Naive thymus-derived CD4-positive, alpha-beta T cell (primary cell): ENCODE measurements at regions of chrX and their contacts with region 1.

Region 1: DNA sequence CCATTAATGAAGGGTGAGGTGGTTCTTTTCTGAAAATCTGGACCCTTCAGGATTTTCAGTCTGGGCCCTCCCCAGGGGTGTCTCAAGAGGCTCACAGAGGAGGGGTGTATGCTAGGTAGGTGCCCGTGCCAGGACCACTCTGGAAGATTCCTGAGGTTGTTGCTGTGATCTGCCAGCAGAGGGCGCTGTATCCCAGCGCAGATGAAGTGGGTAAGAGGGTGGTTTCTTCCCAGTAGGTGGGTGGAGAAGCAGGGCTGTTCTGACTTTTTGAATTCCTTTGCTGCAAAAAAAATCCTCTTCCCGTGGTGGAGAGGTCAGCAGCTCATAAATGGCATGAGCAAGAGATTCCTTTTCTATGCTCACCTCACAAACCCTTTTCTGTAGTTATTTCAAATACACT is 51.1 kb downstream of the SCML1 start:
- DNase-seq: peak; percentile 14 to 58 (median 32)
- ATAC-seq: peak; percentile 79
- H3K4me3 ChIP-seq: no peak overlapping the region
- H3K4me3 Mint-ChIP-seq: peak overlapping the region in 4 of 10 donors; percentile 17 to 25 (median 22)
- H3K27ac ChIP-seq: no peak overlapping the region
- H3K27ac Mint-ChIP-seq: peak overlapping the region in 3 of 9 donors; percentile 38 to 75 (median 65)
- H3K4me1 ChIP-seq: peaks cover 0 to 7% of the 10 kb centered on the region in 2 donors
- H3K4me1 Mint-ChIP-seq: peaks cover 5 to 25% (median 19%) of the 10 kb centered on the region in 7 donors
- H3K27me3 ChIP-seq: no peaks in the 10 kb centered on the region
- H3K27me3 Mint-ChIP-seq: peaks cover 0 to 4% (median 0%) of the 10 kb centered on the region in 5 donors

Region 2: GRCh38 chrX:17860811-17861488 is 72.5 kb after region 1 on chrX and contains the start of gene RAI2:
- CTCF ChIA-PET with region 1: no interaction called
- POLR2A ChIA-PET with region 1: no interaction called
- intact Hi-C with region 1: loop called in 1 of 2 experiments (anchors 5 kb)
- DNase-seq: peak in 6 of 9 donors; percentile 8 to 51 (median 26)
- ATAC-seq: peak; percentile 73
- H3K4me3 ChIP-seq: peak within 1 kb of the TSS; percentile 37
- H3K4me3 Mint-ChIP-seq: peak within 1 kb of the TSS; percentile 54 to 89 (median 86)
- H3K27ac ChIP-seq: no peak within 1 kb of the TSS
- H3K27ac Mint-ChIP-seq: peak within 1 kb of the TSS in 2 of 9 donors; percentile 62 to 70
- H3K4me1 ChIP-seq: no peaks in the 10 kb centered on the region
- H3K4me1 Mint-ChIP-seq: peaks cover 0 to 11% (median 5%) of the 10 kb centered on the region in 7 donors
- H3K27me3 ChIP-seq: no peaks in the 10 kb centered on the region
- H3K27me3 Mint-ChIP-seq: peaks cover 0 to 50% (median 27%) of the 10 kb centered on the region in 5 donors
- total RNA-seq, gene RAI2: 1.6 to 2.8 (median 2.2) TPM in 4 of 5 experiments, not detected in the other

Region 3: DNA sequence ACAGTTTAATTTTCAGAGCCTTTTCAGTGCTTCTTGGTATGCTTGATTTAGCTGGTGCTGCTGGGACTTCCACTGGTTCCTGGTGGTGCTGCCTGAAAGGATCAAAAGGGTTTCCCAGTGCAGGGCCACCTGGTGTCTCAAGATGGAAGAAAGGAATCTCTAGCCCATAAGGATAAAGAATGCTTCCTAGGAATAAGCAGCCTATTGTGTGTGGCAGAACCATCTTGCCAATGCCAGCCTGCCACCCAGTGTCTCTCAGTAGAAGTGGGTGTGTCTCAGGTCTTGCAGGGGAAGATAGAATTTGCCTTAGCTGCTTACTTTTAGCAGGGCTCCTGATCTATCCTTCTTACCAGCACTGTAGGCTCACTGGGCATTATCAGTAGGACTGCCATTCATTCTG is 87.7 kb after region 1 on chrX:
- CTCF ChIA-PET with region 1: no interaction called
- POLR2A ChIA-PET with region 1: no interaction called
- intact Hi-C with region 1: no loop called
- DNase-seq: no peak
- ATAC-seq: no peak
- H3K4me3 ChIP-seq: no peak overlapping the region
- H3K4me3 Mint-ChIP-seq: no peak overlapping the region
- H3K27ac ChIP-seq: no peak overlapping the region
- H3K27ac Mint-ChIP-seq: no peak overlapping the region
- H3K4me1 ChIP-seq: no peaks in the 10 kb centered on the region
- H3K4me1 Mint-ChIP-seq: no peaks in the 10 kb centered on the region
- H3K27me3 ChIP-seq: no peaks in the 10 kb centered on the region
- H3K27me3 Mint-ChIP-seq: peaks cover 5 to 21% (median 16%) of the 10 kb centered on the region in 5 donors

Region 4: DNA sequence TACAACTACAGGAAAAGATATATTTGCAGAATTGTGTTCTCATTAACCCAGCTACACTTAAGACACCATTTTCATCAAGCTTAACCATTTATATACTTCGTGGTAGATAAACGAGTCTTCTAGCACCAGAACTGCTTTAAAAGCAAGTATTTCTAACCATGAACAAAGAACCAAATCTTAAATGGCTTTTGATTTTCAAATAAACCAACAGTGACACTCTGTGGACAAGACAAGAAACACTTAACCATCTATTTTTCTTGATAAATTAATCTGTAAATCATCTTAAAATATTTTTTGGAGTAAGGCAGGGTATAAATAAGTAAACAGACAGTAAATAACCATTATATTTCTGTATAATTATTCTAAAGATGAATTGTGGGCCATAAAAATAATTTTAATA is 422.0 kb after region 1 on chrX:
- CTCF ChIA-PET with region 1: no interaction called
- POLR2A ChIA-PET with region 1: no interaction called
- intact Hi-C with region 1: loop called in 1 of 2 experiments (anchors 1 kb)
- DNase-seq: peak in 5 of 9 donors; percentile 0 to 10 (median 7)
- ATAC-seq: no peak
- H3K4me3 ChIP-seq: no peak overlapping the region
- H3K4me3 Mint-ChIP-seq: no peak overlapping the region
- H3K27ac ChIP-seq: no peak overlapping the region
- H3K27ac Mint-ChIP-seq: no peak overlapping the region
- H3K4me1 ChIP-seq: no peaks in the 10 kb centered on the region
- H3K4me1 Mint-ChIP-seq: no peaks in the 10 kb centered on the region
- H3K27me3 ChIP-seq: no peaks in the 10 kb centered on the region
- H3K27me3 Mint-ChIP-seq: no peaks in the 10 kb centered on the region